ENCODE measurements at regions of chr9 and their contacts with region 1.

Region 1: DNA sequence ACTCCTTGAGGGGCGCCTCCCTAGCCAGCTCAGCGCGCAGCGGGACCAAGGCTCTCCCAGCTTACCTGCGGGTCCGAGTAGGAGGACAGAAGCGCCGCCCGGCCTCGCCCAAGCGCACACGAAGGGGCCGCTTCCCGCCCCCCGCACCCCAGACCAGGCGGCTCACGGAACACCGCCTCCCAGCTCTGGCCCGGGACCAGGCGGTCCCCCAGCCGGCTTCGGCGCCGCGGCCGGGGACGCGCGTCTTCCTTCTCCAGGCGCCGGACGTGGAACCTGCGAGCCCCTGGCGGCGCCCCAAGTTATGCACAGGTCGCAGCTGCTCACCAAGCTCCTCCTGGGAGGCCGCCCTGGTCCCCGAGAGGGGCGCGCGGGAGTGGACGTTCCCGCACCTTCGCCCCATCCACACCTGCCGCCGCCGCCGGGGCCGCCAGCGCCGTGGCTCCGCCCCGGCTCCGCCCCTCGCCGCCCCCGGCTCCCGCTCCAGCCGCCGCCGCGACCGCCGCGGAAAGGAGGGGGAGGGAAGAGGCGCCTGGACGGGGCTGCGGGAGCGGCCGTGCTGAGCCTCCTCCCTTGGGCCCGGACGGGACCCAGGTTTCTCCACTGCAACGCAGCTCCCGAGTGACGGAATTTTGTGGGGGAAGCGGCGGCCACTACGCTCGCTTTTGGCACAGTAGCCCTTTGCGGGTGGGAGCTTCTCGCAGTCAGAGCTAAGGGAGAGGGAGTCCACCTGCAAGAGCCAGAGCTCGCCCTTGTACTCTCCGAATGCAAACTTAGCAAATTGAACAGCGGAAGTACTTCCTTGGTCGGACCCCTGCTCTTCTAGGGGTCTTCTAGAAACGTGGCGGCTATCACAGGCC is 77.5 kb upstream of the IFNE start:
- DNase-seq: peak; percentile 85
- H3K4me3 ChIP-seq: peak overlapping the region; percentile 90 to 94 (median 91)
- H3K27ac ChIP-seq: peak overlapping the region; percentile 99
- H3K4me1 ChIP-seq: peaks cover 16% of the 10 kb centered on the region
- H3K27me3 ChIP-seq: no peaks in the 10 kb centered on the region
- CTCF ChIP-seq: no peak

Region 2: GRCh38 chr9:21465859-21466518 is 93.7 kb before region 1 on chr9:
- CTCF ChIA-PET with region 1: interaction called, 8 read pairs
- dilution Hi-C with region 1: loop called (anchors 5 kb)
- in situ Hi-C with region 1: no loop called
- intact Hi-C with region 1: no loop called
- DNase-seq: peak; percentile 36
- H3K4me3 ChIP-seq: no peak overlapping the region
- H3K27ac ChIP-seq: no peak overlapping the region
- H3K4me1 ChIP-seq: no peaks in the 10 kb centered on the region
- H3K27me3 ChIP-seq: no peaks in the 10 kb centered on the region
- CTCF ChIP-seq: peak; percentile 62 to 69

Region 3: GRCh38 chr9:21576331-21577189 is 16.9 kb after region 1 on chr9:
- CTCF ChIA-PET with region 1: no interaction called
- dilution Hi-C with region 1: no loop called
- in situ Hi-C with region 1: no loop called
- intact Hi-C with region 1: loop called (anchors 1 kb)
- DNase-seq: peak; percentile 90
- H3K4me3 ChIP-seq: peak overlapping the region; percentile 29 to 48 (median 36)
- H3K27ac ChIP-seq: peak overlapping the region; percentile 96
- H3K4me1 ChIP-seq: peaks cover 30% of the 10 kb centered on the region
- H3K27me3 ChIP-seq: no peaks in the 10 kb centered on the region
- CTCF ChIP-seq: no peak

Region 4: GRCh38 chr9:21616082-21616778 is 56.6 kb after region 1 on chr9:
- CTCF ChIA-PET with region 1: no interaction called
- dilution Hi-C with region 1: no loop called
- in situ Hi-C with region 1: no loop called
- intact Hi-C with region 1: loop called (anchors 5 kb)
- DNase-seq: peak; percentile 94
- H3K4me3 ChIP-seq: no peak overlapping the region
- H3K27ac ChIP-seq: peak overlapping the region; percentile 71
- H3K4me1 ChIP-seq: peaks cover 37% of the 10 kb centered on the region
- H3K27me3 ChIP-seq: no peaks in the 10 kb centered on the region
- CTCF ChIP-seq: no peak

Region 5: GRCh38 chr9:21626493-21626892 is 66.8 kb after region 1 on chr9:
- CTCF ChIA-PET with region 1: no interaction called
- dilution Hi-C with region 1: no loop called
- in situ Hi-C with region 1: no loop called
- intact Hi-C with region 1: no loop called
- DNase-seq: no peak
- H3K4me3 ChIP-seq: no peak overlapping the region
- H3K27ac ChIP-seq: no peak overlapping the region
- H3K4me1 ChIP-seq: no peaks in the 10 kb centered on the region
- H3K27me3 ChIP-seq: no peaks in the 10 kb centered on the region
- CTCF ChIP-seq: no peak

Region 6: GRCh38 chr9:21688108-21689102 is 128.8 kb after region 1 on chr9:
- CTCF ChIA-PET with region 1: interaction called, 6 read pairs
- dilution Hi-C with region 1: no loop called
- in situ Hi-C with region 1: loop called in 1 of 2 experiments (anchors 10 kb)
- intact Hi-C with region 1: loop called (anchors 1 kb)
- DNase-seq: peak; percentile 87
- H3K4me3 ChIP-seq: peak overlapping the region; percentile 12 to 37 (median 32)
- H3K27ac ChIP-seq: peak overlapping the region; percentile 97
- H3K4me1 ChIP-seq: peaks cover 67% of the 10 kb centered on the region
- H3K27me3 ChIP-seq: no peaks in the 10 kb centered on the region
- CTCF ChIP-seq: no peak